Psoas muscle (tissue), 8 donors: ENCODE measurements at regions of chr1 and their contacts with region 1.

Region 1: DNA sequence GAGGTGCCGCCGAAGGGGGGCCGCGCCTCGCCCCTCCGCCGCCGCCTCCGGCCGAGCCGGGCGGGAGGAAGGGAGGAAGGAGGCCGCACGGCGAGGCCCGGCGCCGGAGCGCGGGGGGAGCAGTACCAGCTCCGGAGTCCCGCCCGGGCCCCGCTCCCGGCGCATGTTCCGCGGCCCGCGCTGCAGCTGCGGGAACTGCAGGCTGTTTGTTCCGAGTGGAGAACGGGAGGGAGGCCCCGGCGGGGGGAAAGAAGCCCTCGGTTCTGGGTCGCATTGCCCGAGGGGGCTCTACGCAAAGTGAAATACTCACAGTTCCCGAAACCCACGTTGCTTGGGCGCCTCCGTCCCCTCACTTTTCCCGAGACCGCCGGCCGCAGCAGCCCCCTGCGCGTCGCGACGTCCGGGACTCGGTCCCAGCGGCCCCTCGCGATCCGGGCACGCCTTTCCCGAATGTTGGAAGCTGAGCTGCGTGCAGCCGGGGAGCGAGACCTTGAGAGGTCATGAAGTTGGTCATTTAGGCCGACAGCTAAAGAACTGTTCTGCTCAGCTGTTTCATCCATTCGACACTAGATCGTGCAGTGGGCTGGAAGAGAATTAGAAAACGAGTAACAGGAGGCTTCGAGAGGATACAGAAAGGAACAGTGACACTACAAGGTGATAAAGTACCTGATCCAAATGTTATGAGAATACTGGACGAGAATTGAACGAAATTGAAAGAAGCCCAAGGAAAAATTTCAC is 521 bp upstream of the LIN9 start:
- DNase-seq: no peak
- ATAC-seq: peak in 2 of 4 donors; percentile 50 to 62
- H3K4me3 ChIP-seq: peak overlapping the region; percentile 97
- H3K27ac ChIP-seq: no peak overlapping the region
- H3K4me1 ChIP-seq: peaks cover 7% of the 10 kb centered on the region
- H3K27me3 ChIP-seq: no peaks in the 10 kb centered on the region
- CTCF ChIP-seq: no peak

Region 2: GRCh38 chr1:226355669-226356551 is 46.4 kb after region 1 on chr1:
- intact Hi-C with region 1: loop called in 1 of 2 experiments (anchors 5 kb)
- DNase-seq: peak; percentile 31 to 70
- ATAC-seq: peak; percentile 92 to 97 (median 95)
- H3K4me3 ChIP-seq: no peak overlapping the region
- H3K27ac ChIP-seq: peak overlapping the region; percentile 53
- H3K4me1 ChIP-seq: peaks cover 11% of the 10 kb centered on the region
- H3K27me3 ChIP-seq: no peaks in the 10 kb centered on the region
- CTCF ChIP-seq: no peak